Activated T-helper 1 cell treated with anti-CD3 and anti-CD28 coated beads, Interleukin-12 subunit alpha, Interleukin-12 subunit beta, Interleukin-2, Interleukin-4 antibody, amounts not matched to agents 30 ng/mL and 10 ng/mL and 1 ng/mL, durations not matched to agents 14 hours and 24 hours and 36 hours (primary cell): ENCODE measurements at regions of chr16 and their contacts with region 1.

Region 1: GRCh38 chr16:4616047-4616811 is 1.5 kb upstream of the UBALD1 start:
- DNase-seq: peak; percentile 98
- H3K4me3 Mint-ChIP-seq: peak overlapping the region; percentile 95
- H3K27ac Mint-ChIP-seq: peak overlapping the region; percentile 98
- H3K4me1 Mint-ChIP-seq: peaks cover 16% of the 10 kb centered on the region
- H3K27me3 Mint-ChIP-seq: peaks cover 2% of the 10 kb centered on the region

Region 2: GRCh38 chr16:4253394-4254150 is 362.7 kb before region 1 on chr16:
- intact Hi-C with region 1: loop called (anchors 5 kb)
- DNase-seq: peak; percentile 99
- H3K4me3 Mint-ChIP-seq: peak overlapping the region; percentile 94
- H3K27ac Mint-ChIP-seq: peak overlapping the region; percentile 98
- H3K4me1 Mint-ChIP-seq: peaks cover 4% of the 10 kb centered on the region
- H3K27me3 Mint-ChIP-seq: peaks cover 2% of the 10 kb centered on the region

Region 3: GRCh38 chr16:4416200-4417032 is 199.8 kb before region 1 on chr16 and contains the start of gene CORO7:
- intact Hi-C with region 1: loop called (anchors 1 kb)
- DNase-seq: peak; percentile 99
- H3K4me3 Mint-ChIP-seq: peak within 1 kb of the TSS; percentile 90
- H3K27ac Mint-ChIP-seq: peak within 1 kb of the TSS; percentile 92
- H3K4me1 Mint-ChIP-seq: peaks cover 16% of the 10 kb centered on the region
- H3K27me3 Mint-ChIP-seq: peaks cover 7% of the 10 kb centered on the region
- total RNA-seq, gene CORO7: 87.9 and 90.8 TPM in 2 replicates

Region 4: DNA sequence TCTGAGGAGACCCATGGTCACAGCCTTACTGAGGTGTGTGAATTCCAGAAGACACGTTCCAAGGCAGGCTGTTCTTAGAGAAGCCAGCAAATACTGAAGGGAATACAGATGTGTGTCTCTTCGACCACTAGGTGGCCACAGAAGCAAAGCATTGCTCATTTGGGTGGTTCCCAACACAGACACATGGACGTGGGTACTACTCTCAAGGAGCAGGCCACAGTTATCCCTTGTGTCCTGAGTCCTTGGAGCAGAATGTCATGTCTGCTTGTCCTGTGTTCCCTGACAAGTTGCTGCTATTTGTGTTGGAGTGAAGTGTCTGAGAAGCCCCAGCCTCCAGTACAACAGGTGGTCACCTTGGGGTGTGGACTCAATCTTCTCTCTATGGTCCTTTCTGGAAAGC is 109.8 kb before region 1 on chr16:
- intact Hi-C with region 1: loop called (anchors 2 kb)
- DNase-seq: peak; percentile 51
- H3K4me3 Mint-ChIP-seq: peak overlapping the region; percentile 70
- H3K27ac Mint-ChIP-seq: peak overlapping the region; percentile 79
- H3K4me1 Mint-ChIP-seq: peaks cover 48% of the 10 kb centered on the region
- H3K27me3 Mint-ChIP-seq: no peaks in the 10 kb centered on the region

Region 5: GRCh38 chr16:4639899-4640509 is 23.8 kb after region 1 on chr16:
- intact Hi-C with region 1: no loop called
- DNase-seq: no peak
- H3K4me3 Mint-ChIP-seq: no peak overlapping the region
- H3K27ac Mint-ChIP-seq: no peak overlapping the region
- H3K4me1 Mint-ChIP-seq: peaks cover 5% of the 10 kb centered on the region
- H3K27me3 Mint-ChIP-seq: no peaks in the 10 kb centered on the region

Region 6: DNA sequence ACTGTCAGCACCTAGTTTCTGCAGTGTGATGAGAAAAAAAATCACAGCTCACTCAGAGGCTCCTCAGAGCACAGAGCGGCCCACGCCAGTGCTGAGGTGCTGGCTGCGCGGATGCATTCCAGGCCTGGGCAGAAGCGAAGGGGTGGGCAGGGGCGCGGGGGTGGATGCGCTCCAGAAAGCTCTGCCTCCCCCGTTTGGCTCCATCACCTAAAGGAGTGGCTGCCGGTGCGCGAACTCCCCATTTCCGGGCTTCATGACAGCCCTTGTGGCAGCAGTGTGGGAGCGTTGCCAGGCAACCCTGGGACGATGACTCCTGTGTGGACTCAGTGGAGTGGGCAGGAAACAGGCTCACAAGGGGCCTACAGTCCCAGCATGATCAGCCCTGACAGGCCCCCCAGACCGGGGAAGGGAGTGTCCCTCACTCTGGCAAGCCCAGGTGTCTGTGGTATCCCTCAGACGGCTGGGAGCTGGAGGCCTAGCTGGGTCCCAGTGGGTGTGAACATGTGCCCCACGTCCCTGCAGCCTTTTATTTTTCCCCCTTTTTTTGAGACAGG is 44.3 kb after region 1 on chr16:
- intact Hi-C with region 1: loop called (anchors 1 kb)
- DNase-seq: peak; percentile 60
- H3K4me3 Mint-ChIP-seq: peak overlapping the region; percentile 54
- H3K27ac Mint-ChIP-seq: peak overlapping the region; percentile 88
- H3K4me1 Mint-ChIP-seq: peaks cover 44% of the 10 kb centered on the region
- H3K27me3 Mint-ChIP-seq: no peaks in the 10 kb centered on the region

Region 7: GRCh38 chr16:4766874-4767628 is 150.8 kb after region 1 on chr16 and contains the start of gene ZNF500:
- intact Hi-C with region 1: loop called (anchors 1 kb)
- DNase-seq: peak; percentile 96
- H3K4me3 Mint-ChIP-seq: peak within 1 kb of the TSS; percentile 95
- H3K27ac Mint-ChIP-seq: peak within 1 kb of the TSS; percentile 87
- H3K4me1 Mint-ChIP-seq: peaks cover 20% of the 10 kb centered on the region
- H3K27me3 Mint-ChIP-seq: no peaks in the 10 kb centered on the region
- total RNA-seq, gene ZNF500: 16.6 and 17.4 TPM in 2 replicates

Region 8: GRCh38 chr16:4957720-4958509 is 341.7 kb after region 1 on chr16 and contains the start of gene SEC14L5:
- intact Hi-C with region 1: loop called (anchors 5 kb)
- DNase-seq: peak; percentile 90
- H3K4me3 Mint-ChIP-seq: peak within 1 kb of the TSS; percentile 85
- H3K27ac Mint-ChIP-seq: peak within 1 kb of the TSS; percentile 26
- H3K4me1 Mint-ChIP-seq: peaks cover 22% of the 10 kb centered on the region
- H3K27me3 Mint-ChIP-seq: peaks cover 21% of the 10 kb centered on the region
- total RNA-seq, gene SEC14L5: not detected in 2 replicates